ENCODE measurements at regions of chr15 and their contacts with region 1.

Region 1: GRCh38 chr15:64507293-64507802 is 47.0 kb downstream of the ZNF609 start:
- DNase-seq: peak; percentile 16
- ATAC-seq: peak; percentile 78
- H3K4me3 Mint-ChIP-seq: peak overlapping the region; percentile 52
- H3K27ac Mint-ChIP-seq: peak overlapping the region; percentile 79
- H3K4me1 Mint-ChIP-seq: peaks cover 50% of the 10 kb centered on the region
- H3K27me3 Mint-ChIP-seq: no peaks in the 10 kb centered on the region
- CTCF ChIP-seq: no peak

Region 2: DNA sequence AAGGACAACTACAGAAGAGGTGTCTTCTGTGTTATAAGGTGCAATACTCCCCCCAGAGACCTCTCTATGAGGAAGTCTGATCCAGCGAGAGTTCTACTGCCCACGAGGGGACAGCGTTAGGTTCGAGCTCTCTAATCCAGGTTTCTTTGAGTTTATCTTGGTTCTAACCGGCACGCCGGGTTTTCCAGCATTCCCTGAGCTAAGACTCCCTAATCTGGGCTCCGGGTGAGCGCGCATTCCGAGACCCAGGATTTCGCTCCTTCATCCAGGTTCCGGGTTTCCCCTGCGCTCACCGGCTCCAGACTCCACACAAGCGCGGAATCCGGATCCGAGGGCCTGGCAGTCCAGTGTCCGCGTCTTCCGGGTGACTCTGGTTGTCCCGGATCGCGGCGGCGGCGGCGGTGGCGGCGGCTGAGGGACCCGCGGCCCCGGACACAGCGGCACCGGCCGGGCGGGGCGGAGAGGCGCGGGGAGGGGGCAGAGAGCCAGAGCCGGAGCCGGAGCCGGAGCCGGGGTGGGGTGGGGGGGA is 47.1 kb before region 1 on chr15 and contains the start of gene ZNF609:
- CTCF ChIA-PET with region 1: no interaction called
- POLR2A ChIA-PET with region 1: interaction called, 6 read pairs
- intact Hi-C with region 1: loop called (anchors 5 kb)
- DNase-seq: peak; percentile 89
- ATAC-seq: peak; percentile 86
- H3K4me3 Mint-ChIP-seq: peak within 1 kb of the TSS; percentile 92
- H3K27ac Mint-ChIP-seq: peak within 1 kb of the TSS; percentile 81
- H3K4me1 Mint-ChIP-seq: peaks cover 67% of the 10 kb centered on the region
- H3K27me3 Mint-ChIP-seq: no peaks in the 10 kb centered on the region
- CTCF ChIP-seq: no peak
- total RNA-seq, gene ZNF609: 25.9 and 28.6 TPM in 2 replicates

Region 3: GRCh38 chr15:64490598-64491259 is 16.6 kb before region 1 on chr15:
- CTCF ChIA-PET with region 1: no interaction called
- POLR2A ChIA-PET with region 1: no interaction called
- intact Hi-C with region 1: no loop called
- DNase-seq: no peak
- ATAC-seq: no peak
- H3K4me3 Mint-ChIP-seq: no peak overlapping the region
- H3K27ac Mint-ChIP-seq: no peak overlapping the region
- H3K4me1 Mint-ChIP-seq: no peaks in the 10 kb centered on the region
- H3K27me3 Mint-ChIP-seq: no peaks in the 10 kb centered on the region
- CTCF ChIP-seq: no peak

Region 4: GRCh38 chr15:64571857-64572291 is 64.5 kb after region 1 on chr15:
- CTCF ChIA-PET with region 1: no interaction called
- POLR2A ChIA-PET with region 1: no interaction called
- intact Hi-C with region 1: loop called (anchors 5 kb)
- DNase-seq: no peak
- ATAC-seq: peak; percentile 72
- H3K4me3 Mint-ChIP-seq: peak overlapping the region; percentile 42
- H3K27ac Mint-ChIP-seq: peak overlapping the region; percentile 89
- H3K4me1 Mint-ChIP-seq: peaks cover 72% of the 10 kb centered on the region
- H3K27me3 Mint-ChIP-seq: no peaks in the 10 kb centered on the region
- CTCF ChIP-seq: no peak

Region 5: DNA sequence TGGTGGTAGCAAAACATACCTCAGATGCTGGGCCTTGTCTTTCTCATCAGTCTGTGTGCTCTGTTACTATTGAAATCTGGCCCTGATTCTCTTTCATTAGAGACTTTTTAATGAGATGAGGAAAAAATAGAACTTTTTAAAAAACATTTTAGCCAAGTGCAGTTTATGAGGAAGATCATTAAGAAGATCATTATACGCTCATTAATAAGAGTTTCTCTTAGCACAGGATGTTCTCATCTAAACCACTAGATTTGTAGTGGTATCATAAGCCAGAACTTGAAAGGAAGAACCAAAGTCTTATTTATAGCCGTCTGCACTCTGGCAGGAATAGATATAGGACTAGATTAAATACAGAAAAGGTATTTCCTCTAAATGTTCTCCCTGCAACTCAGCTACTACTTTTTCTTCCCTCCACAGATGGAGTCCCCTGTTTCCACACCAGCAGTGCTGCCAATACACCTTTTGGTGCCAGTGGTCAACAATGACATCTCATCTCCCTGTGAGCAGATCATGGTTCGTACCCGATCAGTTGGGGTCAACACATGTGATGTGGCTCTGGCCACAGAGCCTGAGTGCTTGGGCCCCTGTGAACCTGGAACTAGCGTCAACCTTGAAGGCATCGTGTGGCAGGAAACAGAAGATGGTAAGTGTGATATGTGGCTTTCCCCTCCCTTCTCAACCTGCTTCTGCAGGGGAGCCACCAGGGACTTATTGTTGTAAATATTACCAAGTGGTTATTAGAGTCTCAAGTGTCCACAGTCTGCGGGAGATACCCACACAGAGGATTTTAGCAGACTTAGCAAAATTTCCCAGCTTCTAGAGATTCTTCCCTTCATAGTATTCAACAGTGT is 115.3 kb after region 1 on chr15:
- CTCF ChIA-PET with region 1: no interaction called
- POLR2A ChIA-PET with region 1: interaction called, 4 read pairs
- intact Hi-C with region 1: loop called (anchors 10 kb)
- DNase-seq: no peak
- ATAC-seq: peak; percentile 76
- H3K4me3 Mint-ChIP-seq: peak overlapping the region; percentile 6
- H3K27ac Mint-ChIP-seq: peak overlapping the region; percentile 82
- H3K4me1 Mint-ChIP-seq: peaks cover 54% of the 10 kb centered on the region
- H3K27me3 Mint-ChIP-seq: no peaks in the 10 kb centered on the region
- CTCF ChIP-seq: no peak

Region 6: DNA sequence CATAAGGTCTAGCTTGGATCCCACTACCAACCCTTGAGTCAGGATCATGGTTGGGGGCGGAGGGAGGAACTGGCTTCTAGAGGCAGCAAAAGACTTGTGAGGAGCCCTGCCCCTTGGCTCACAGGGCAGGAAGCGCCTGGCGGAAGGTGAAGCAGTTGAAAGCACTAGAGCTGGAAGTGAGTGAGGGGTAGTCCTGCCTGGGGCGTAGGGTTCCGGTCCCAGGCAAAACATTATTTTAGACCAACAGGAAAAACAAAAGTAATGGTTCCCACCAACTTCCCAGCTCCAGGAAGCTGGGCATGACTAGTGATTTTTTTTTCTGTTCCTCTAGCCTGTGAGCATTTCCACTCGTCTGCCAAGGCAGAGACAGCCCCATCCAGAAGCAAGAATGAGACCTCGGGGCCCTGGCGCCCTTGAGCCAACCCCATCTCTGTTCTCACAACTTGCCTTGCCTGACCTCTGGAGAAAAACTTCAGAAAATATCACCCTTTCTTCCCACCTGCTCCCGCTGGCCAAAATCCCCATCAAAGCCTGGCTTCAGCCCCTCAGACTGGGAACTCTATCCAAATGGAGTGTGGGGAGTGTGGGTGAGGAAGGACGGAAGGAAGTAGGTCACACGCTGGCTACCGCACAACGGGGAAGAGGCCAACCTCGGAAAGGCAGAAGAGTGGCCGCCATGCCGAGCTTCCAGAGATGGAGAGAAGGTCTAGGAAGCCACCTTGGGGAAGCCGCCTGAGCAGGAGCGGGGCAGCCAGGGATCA is 210.6 kb after region 1 on chr15:
- CTCF ChIA-PET with region 1: no interaction called
- POLR2A ChIA-PET with region 1: interaction called, 10 read pairs
- intact Hi-C with region 1: no loop called
- DNase-seq: no peak
- ATAC-seq: no peak
- H3K4me3 Mint-ChIP-seq: no peak overlapping the region
- H3K27ac Mint-ChIP-seq: no peak overlapping the region
- H3K4me1 Mint-ChIP-seq: no peaks in the 10 kb centered on the region
- H3K27me3 Mint-ChIP-seq: no peaks in the 10 kb centered on the region
- CTCF ChIP-seq: no peak

Region 7: GRCh38 chr15:64961013-64961412 is 453.7 kb after region 1 on chr15:
- CTCF ChIA-PET with region 1: no interaction called
- POLR2A ChIA-PET with region 1: interaction called, 10 read pairs
- intact Hi-C with region 1: no loop called
- DNase-seq: no peak
- ATAC-seq: no peak
- H3K4me3 Mint-ChIP-seq: no peak overlapping the region
- H3K27ac Mint-ChIP-seq: no peak overlapping the region
- H3K4me1 Mint-ChIP-seq: no peaks in the 10 kb centered on the region
- H3K27me3 Mint-ChIP-seq: no peaks in the 10 kb centered on the region
- CTCF ChIP-seq: no peak